BJ (cell line): ENCODE measurements at regions of chr11 and their contacts with region 1.

Region 1: DNA sequence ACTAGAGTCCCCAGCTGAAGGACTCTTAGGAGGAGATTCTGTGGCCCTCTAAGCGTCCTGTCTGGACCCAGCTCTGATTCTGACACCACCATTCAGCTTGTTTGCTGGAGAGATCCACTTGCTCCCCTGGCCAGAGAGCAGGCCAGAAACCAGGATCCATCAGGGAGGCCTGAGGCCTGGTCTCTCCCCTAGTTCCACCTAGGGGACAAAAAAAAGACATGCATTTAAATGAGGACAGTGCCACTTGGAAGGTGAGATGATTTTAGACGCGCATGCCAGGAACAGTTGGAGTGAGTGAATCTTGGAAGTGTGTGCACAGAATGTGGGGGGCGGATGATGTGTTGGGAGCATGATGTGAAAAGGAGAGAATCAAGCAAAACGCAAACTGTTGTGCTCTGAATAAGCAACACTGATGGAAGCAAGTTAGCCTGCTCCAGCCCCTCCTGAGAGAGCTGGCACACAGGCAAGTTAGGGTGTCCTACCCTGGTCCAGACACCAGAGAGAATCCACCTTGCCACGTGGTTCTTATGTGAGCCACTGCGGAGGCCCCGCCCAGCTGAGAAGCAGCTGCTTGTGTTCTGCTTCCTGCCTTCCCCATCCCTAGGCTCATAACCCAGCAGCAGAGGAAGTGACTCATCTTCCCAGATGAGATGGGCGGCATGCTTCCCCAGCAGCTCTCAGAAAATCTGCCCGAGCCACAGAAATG is 8.0 kb upstream of the SLCO2B1 start:
- DNase-seq: peak; percentile 73
- H3K4me3 ChIP-seq: no peak overlapping the region
- H3K27me3 ChIP-seq: peaks cover 8% of the 10 kb centered on the region
- CTCF ChIP-seq: no peak

Region 2: GRCh38 chr11:74806267-74806666 is 336.6 kb before region 1 on chr11:
- CTCF ChIA-PET with region 1: no interaction called
- POLR2A ChIA-PET with region 1: no interaction called
- DNase-seq: no peak
- H3K4me3 ChIP-seq: no peak overlapping the region
- H3K27me3 ChIP-seq: no peaks in the 10 kb centered on the region
- CTCF ChIP-seq: no peak

Region 3: GRCh38 chr11:74929431-74930363 is 213.2 kb before region 1 on chr11:
- CTCF ChIA-PET with region 1: interaction called, 18 read pairs
- POLR2A ChIA-PET with region 1: no interaction called
- DNase-seq: no peak
- H3K4me3 ChIP-seq: no peak overlapping the region
- H3K27me3 ChIP-seq: no peaks in the 10 kb centered on the region
- CTCF ChIP-seq: peak; percentile 80

Region 4: GRCh38 chr11:75163921-75164849 is 21.3 kb after region 1 on chr11:
- CTCF ChIA-PET with region 1: interaction called, 13 read pairs
- POLR2A ChIA-PET with region 1: no interaction called
- DNase-seq: no peak
- H3K4me3 ChIP-seq: no peak overlapping the region
- H3K27me3 ChIP-seq: peaks cover 26% of the 10 kb centered on the region
- CTCF ChIP-seq: no peak

Region 5: DNA sequence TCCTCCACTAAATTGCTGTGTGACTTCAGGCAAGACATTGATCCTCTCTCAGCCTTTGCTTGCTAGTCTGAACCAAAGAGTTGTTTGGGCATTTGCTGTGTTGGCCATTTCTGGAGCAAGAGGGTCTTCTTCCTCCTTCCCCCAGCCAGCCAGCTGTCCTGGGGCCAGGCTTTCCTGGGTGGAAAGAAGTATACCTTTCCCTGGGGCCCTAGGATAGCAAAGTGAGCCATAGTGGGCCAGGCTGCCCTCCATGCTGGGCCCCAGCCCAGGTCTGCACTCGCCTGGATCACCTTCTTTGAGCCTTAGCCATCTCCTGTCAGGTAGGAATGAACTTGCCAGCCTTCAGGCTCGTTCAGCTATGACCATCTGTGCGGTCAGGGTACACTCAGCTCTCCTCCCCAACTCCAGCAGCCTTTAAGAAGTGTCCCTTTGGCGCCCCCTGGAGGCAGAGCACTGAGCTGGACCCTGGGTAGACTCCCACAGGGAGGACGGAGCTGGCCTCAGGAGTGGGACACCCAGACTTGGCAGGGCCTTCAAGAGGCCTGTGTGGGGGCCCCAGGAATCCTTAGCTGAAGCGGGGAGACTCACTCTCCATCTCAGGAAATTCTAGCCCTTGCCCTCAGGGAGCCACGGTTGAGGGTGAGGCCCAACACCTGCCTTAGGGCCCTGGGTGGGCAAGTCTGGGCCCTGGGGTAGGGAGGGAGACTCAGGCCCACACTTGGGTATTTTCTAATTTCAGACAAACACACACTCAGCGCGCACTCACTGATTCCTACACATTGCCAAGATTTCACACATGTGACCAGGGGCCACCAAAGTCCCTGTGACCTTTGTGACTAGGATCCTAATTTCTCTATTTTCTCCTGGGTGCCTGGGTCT is 62.1 kb after region 1 on chr11:
- CTCF ChIA-PET with region 1: interaction called, 309 read pairs
- POLR2A ChIA-PET with region 1: no interaction called
- DNase-seq: peak; percentile 4
- H3K4me3 ChIP-seq: no peak overlapping the region
- H3K27me3 ChIP-seq: peaks cover 10% of the 10 kb centered on the region
- CTCF ChIP-seq: peak; percentile 95

Region 6: GRCh38 chr11:75241036-75241905 is 98.4 kb after region 1 on chr11:
- CTCF ChIA-PET with region 1: interaction called, 166 read pairs
- POLR2A ChIA-PET with region 1: no interaction called
- DNase-seq: peak; percentile 39
- H3K4me3 ChIP-seq: peak overlapping the region; percentile 38
- H3K27me3 ChIP-seq: peaks cover 45% of the 10 kb centered on the region
- CTCF ChIP-seq: peak; percentile 31